Activated CD8-positive, alpha-beta T cell treated with anti-CD3 and anti-CD28 coated beads for 36 hours (primary cell): ENCODE measurements at regions of chr9 and their contacts with region 1.

Region 1: GRCh38 chr9:111597817-111598729 is 1.4 kb downstream of the PTGR1 start:
- DNase-seq: peak; percentile 76
- ATAC-seq: peak; percentile 76
- H3K4me3 Mint-ChIP-seq: peak overlapping the region; percentile 79
- H3K27ac Mint-ChIP-seq: no peak overlapping the region
- H3K4me1 Mint-ChIP-seq: peaks cover 11% of the 10 kb centered on the region
- H3K27me3 Mint-ChIP-seq: peaks cover 29% of the 10 kb centered on the region
- CTCF ChIP-seq: peak; percentile 83

Region 2: GRCh38 chr9:111613441-111614039 is 15.5 kb after region 1 on chr9:
- CTCF ChIA-PET with region 1: interaction called, 10 read pairs
- POLR2A ChIA-PET with region 1: no interaction called
- intact Hi-C with region 1: no loop called
- DNase-seq: no peak
- ATAC-seq: no peak
- H3K4me3 Mint-ChIP-seq: no peak overlapping the region
- H3K27ac Mint-ChIP-seq: no peak overlapping the region
- H3K4me1 Mint-ChIP-seq: no peaks in the 10 kb centered on the region
- H3K27me3 Mint-ChIP-seq: peaks cover 18% of the 10 kb centered on the region
- CTCF ChIP-seq: no peak

Region 3: DNA sequence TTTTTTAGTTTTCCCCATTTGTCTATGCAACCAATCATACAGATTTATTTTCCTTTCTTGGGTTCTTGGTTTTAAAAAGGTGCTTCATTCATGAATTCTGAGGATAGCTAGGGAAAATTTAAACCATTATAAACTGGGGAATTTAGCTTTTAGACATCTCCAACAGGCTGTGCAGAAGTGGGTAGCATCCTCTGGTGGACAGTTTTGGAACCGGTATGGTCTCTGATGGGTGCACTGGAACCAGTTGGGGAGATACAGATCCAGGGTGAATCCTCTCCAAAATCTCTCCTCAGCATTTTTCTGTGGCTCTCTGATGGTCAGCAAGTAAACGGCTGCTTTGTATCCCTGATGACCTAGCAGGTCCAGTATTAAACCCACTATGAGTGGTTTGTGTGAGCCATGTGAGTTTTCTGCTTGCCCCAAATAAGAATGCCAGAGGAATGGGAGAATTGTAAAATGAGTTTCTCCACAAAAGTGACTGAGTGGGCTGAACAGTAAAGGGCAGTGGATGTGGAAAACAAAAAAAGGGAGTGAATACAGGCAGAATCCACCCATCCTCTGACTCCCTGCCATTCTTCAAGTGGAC is 23.9 kb after region 1 on chr9:
- CTCF ChIA-PET with region 1: interaction called, 25 read pairs
- POLR2A ChIA-PET with region 1: no interaction called
- intact Hi-C with region 1: no loop called
- DNase-seq: peak; percentile 52
- ATAC-seq: peak; percentile 73
- H3K4me3 Mint-ChIP-seq: no peak overlapping the region
- H3K27ac Mint-ChIP-seq: no peak overlapping the region
- H3K4me1 Mint-ChIP-seq: no peaks in the 10 kb centered on the region
- H3K27me3 Mint-ChIP-seq: peaks cover 6% of the 10 kb centered on the region
- CTCF ChIP-seq: peak; percentile 73

Region 4: DNA sequence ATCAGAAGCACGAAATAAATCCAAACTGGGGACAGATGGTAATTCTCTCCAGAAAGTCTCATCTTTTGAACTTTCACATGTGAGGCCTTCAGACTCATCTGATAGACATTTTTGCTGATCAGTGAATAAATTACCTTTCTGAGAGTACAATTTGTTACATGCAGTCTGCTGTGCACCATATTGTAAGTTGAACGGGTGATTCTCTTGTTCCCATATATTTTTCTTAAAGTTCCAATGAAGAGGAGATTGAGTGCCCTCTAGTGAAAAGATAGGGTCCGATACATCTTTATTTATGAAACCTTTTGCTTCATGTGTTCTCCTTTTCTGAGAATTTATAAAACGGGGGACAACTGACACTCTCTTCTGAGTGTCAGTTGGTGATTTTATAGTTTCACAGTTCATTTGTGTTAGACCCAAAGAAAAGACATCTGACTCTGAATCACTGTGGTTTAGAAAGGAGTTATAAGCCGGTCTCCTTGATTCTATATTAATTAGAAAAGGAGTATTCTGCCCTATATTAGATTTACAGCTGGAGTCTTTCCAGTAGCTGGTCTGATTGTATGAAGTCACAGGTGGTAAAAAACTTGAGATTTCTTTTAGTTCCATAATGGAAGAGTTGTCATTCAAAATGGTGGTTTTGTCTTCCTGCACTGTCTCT is 93.7 kb after region 1 on chr9:
- CTCF ChIA-PET with region 1: interaction called, 12 read pairs
- POLR2A ChIA-PET with region 1: no interaction called
- intact Hi-C with region 1: loop called (anchors 5 kb)
- DNase-seq: no peak
- ATAC-seq: no peak
- H3K4me3 Mint-ChIP-seq: no peak overlapping the region
- H3K27ac Mint-ChIP-seq: no peak overlapping the region
- H3K4me1 Mint-ChIP-seq: peaks cover 4% of the 10 kb centered on the region
- H3K27me3 Mint-ChIP-seq: no peaks in the 10 kb centered on the region
- CTCF ChIP-seq: peak; percentile 23

Region 5: DNA sequence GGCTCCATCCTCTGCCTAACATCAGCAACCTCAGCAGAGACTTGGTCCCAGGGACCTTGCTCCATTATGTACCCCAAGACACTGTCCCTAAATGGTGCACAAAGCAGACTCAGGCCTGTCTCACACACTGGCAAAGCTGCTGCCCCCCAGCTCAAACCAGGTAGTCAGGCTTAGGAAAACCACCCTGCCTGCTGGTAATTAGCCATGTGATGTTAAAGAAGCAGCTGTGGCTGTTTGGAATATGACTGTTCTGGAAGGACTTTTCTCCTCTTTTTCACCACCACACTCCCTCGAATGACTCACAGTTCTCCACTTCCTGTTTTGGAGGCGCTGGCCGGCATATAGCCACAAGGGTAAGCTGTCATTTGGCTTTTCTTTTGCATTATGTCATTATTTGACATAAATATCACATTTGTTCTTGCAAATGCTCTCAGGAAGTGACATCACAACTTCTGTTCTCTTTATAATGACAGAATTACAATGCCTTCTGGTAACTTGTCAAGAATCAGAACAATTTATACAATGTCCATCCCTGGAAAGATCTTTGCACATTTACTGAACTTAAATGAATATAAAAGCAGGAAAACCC is 463.2 kb after region 1 on chr9:
- CTCF ChIA-PET with region 1: no interaction called
- POLR2A ChIA-PET with region 1: no interaction called
- intact Hi-C with region 1: loop called (anchors 10 kb)
- DNase-seq: peak; percentile 65
- ATAC-seq: peak; percentile 84
- H3K4me3 Mint-ChIP-seq: no peak overlapping the region
- H3K27ac Mint-ChIP-seq: peak overlapping the region; percentile 7
- H3K4me1 Mint-ChIP-seq: peaks cover 22% of the 10 kb centered on the region
- H3K27me3 Mint-ChIP-seq: no peaks in the 10 kb centered on the region
- CTCF ChIP-seq: no peak